ENCODE measurements at regions of chr2 and their contacts with region 1.

Region 1: GRCh38 chr2:169584005-169584877 is at the start of gene PPIG:
- DNase-seq: peak; percentile 83
- H3K4me3 ChIP-seq: peak within 1 kb of the TSS; percentile 70 to 98
- H3K27ac ChIP-seq: peak within 1 kb of the TSS; percentile 98 to 99
- H3K4me1 ChIP-seq: no peaks in the 10 kb centered on the region
- H3K27me3 ChIP-seq: no peaks in the 10 kb centered on the region
- CTCF ChIP-seq: no peak
- POLR2A ChIP-seq: peak; percentile 47
- total RNA-seq, gene PPIG: 30.9 to 38.0 TPM

Region 2: DNA sequence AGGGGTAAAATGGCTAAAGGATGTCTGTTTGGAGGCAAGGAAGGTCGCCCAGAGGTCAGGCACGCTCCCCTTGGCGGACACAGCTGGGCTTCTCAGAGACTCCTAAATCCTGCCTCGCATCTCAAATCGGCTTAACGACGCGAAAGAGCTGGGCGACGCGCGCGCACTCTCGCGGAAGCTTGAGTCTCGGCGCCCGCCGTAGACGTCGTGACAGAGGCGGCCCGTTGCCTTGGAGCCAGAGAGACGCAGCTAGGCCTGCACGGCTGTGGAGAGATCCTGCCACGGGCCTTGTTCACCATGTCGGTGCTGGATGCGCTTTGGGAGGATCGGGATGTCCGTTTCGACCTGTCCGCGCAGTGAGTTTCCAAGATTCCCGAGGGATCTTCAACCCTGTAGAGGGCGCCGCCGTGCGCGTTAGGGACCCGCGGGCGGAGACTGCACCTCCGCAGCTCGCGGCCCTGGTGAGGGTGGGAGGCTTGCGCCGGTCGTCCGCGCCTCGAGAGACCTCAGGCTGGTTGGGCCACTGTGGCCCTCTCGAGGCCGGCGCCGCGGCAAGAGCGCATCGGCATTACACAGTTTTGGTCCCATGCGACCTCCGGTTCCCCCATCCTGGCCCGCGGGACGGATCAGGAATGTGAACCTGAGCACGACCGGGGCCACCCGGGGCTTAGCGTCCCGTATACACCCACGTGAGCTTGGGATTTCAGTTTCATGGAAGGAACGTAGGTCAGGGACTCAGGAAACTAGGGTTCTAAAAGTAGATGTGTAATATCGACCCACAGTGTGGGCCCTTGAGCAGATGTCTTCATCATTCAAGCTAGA is 104.8 kb before region 1 on chr2 and contains the start of gene BBS5:
- intact Hi-C with region 1: loop called (anchors 2 kb)
- DNase-seq: peak; percentile 75
- H3K4me3 ChIP-seq: peak within 1 kb of the TSS; percentile 48 to 60
- H3K27ac ChIP-seq: peak within 1 kb of the TSS; percentile 77 to 79
- H3K4me1 ChIP-seq: no peaks in the 10 kb centered on the region
- H3K27me3 ChIP-seq: no peaks in the 10 kb centered on the region
- CTCF ChIP-seq: peak in 3 of 4 experiments; percentile 46 to 62 (median 52)
- POLR2A ChIP-seq: no peak
- total RNA-seq, gene BBS5: 7.7 to 14.7 TPM

Region 3: GRCh38 chr2:169694113-169694903 is 110.1 kb after region 1 on chr2 and contains the starts of genes CFAP210 and PHOSPHO2:
- intact Hi-C with region 1: loop called (anchors 10 kb)
- DNase-seq: peak; percentile 99
- H3K4me3 ChIP-seq: peak within 1 kb of the TSS; percentile 71 to 78
- H3K27ac ChIP-seq: peak within 1 kb of the TSS; percentile 89 to 91
- H3K4me1 ChIP-seq: no peaks in the 10 kb centered on the region
- H3K27me3 ChIP-seq: no peaks in the 10 kb centered on the region
- CTCF ChIP-seq: peak in 1 of 4 experiments; percentile 30
- POLR2A ChIP-seq: peak; percentile 85
- total RNA-seq, gene CFAP210: 0.27 to 1.0 TPM
- total RNA-seq, gene PHOSPHO2: 11.9 to 17.4 TPM

Measured in prostate gland (tissue), 2 donors.